ENCODE measurements at regions of chr4 and their contacts with region 1.

Region 1: GRCh38 chr4:185471235-185472102 is at the start of gene CCDC110:
- DNase-seq: peak; percentile 18 to 96
- H3K4me3 ChIP-seq: peak within 1 kb of the TSS; percentile 80 to 97
- H3K27ac ChIP-seq: peak within 1 kb of the TSS; percentile 68 to 74
- H3K4me1 ChIP-seq: peaks cover 0 to 2% of the 10 kb centered on the region in 2 donors
- H3K27me3 ChIP-seq: no peaks in the 10 kb centered on the region
- CTCF ChIP-seq: peak; percentile 48 to 75 (median 65)
- total RNA-seq, gene CCDC110: not detected

Region 2: DNA sequence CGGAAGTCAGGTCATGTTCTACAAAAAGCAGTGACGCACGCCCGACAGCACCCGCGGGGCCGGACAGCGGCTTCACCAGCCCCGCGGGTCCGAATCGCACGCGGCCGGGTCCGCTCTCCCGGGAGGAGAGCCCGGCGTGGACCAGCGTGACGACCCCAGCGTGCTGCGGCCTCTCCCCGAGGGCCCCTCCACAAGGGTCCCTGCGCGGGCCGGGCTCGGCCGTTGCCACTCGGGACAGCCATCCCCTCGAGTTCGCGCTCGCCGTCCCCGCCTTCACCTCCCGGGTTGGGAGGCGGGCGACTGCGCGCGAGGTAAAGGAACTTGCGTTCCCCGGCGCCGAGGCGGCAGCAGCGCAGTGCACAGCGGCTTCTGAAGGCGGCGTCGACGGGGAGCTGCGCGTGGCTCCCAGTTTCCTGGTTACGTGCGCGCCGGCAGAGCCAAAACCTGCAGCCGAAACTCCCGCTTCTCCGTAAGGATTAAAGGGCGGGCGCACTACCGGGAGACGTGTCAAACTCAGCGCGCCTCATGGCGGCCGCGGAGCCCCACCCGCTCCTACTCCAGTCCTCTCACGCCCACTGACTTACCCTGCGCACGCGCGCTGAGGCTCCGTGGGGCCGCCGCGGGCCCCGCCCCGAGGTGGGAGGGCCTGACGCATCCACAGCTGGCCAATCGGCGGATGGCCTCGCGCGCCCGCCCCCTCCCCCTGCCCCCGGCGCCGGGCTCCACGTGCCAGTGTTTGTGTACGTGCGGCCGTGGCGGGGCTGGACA is 75.3 kb before region 1 on chr4:
- intact Hi-C with region 1: loop called (anchors 2 kb)
- DNase-seq: peak; percentile 96 to 99
- H3K4me3 ChIP-seq: peak overlapping the region; percentile 86 to 87
- H3K27ac ChIP-seq: peak overlapping the region; percentile 99 to 100
- H3K4me1 ChIP-seq: peaks cover 2 to 13% of the 10 kb centered on the region in 2 donors
- H3K27me3 ChIP-seq: no peaks in the 10 kb centered on the region
- CTCF ChIP-seq: no peak

Region 3: GRCh38 chr4:185513489-185514181 is 42.2 kb after region 1 on chr4:
- intact Hi-C with region 1: loop called (anchors 5 kb)
- DNase-seq: no peak
- H3K4me3 ChIP-seq: no peak overlapping the region
- H3K27ac ChIP-seq: peak overlapping the region; percentile 13 to 54
- H3K4me1 ChIP-seq: peaks cover 0 to 20% of the 10 kb centered on the region in 2 donors
- H3K27me3 ChIP-seq: no peaks in the 10 kb centered on the region
- CTCF ChIP-seq: no peak

Region 4: DNA sequence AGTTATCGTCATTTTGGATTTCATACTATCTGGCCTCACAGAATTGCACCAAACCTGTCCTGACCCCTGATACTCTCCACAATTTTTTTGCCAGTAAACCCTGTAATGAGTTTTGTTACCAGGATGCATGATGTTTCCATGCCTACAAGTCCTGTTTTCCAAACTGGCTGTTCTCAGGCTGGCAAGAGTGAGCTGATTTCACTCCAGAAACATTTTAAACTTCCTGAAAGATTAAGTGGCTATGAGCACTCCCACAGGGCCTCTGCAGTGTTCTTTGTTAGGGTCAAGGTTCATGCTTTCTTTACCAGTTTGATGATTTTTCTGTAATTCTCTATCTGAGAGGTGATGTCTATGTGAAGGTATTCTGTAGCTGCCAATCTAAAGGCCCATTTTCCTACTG is 95.5 kb after region 1 on chr4:
- intact Hi-C with region 1: loop called (anchors 2 kb)
- DNase-seq: peak in 1 of 2 donors; percentile 90
- H3K4me3 ChIP-seq: no peak overlapping the region
- H3K27ac ChIP-seq: peak overlapping the region; percentile 94 to 95
- H3K4me1 ChIP-seq: peaks cover 17 to 37% of the 10 kb centered on the region in 2 donors
- H3K27me3 ChIP-seq: no peaks in the 10 kb centered on the region
- CTCF ChIP-seq: no peak

Region 5: GRCh38 chr4:185847352-185848107 is 376.1 kb after region 1 on chr4:
- intact Hi-C with region 1: no loop called
- DNase-seq: no peak
- H3K4me3 ChIP-seq: no peak overlapping the region
- H3K27ac ChIP-seq: peak overlapping the region in 1 of 2 donors; percentile 23
- H3K4me1 ChIP-seq: peaks cover 0 to 2% of the 10 kb centered on the region in 2 donors
- H3K27me3 ChIP-seq: no peaks in the 10 kb centered on the region
- CTCF ChIP-seq: no peak

Region 6: DNA sequence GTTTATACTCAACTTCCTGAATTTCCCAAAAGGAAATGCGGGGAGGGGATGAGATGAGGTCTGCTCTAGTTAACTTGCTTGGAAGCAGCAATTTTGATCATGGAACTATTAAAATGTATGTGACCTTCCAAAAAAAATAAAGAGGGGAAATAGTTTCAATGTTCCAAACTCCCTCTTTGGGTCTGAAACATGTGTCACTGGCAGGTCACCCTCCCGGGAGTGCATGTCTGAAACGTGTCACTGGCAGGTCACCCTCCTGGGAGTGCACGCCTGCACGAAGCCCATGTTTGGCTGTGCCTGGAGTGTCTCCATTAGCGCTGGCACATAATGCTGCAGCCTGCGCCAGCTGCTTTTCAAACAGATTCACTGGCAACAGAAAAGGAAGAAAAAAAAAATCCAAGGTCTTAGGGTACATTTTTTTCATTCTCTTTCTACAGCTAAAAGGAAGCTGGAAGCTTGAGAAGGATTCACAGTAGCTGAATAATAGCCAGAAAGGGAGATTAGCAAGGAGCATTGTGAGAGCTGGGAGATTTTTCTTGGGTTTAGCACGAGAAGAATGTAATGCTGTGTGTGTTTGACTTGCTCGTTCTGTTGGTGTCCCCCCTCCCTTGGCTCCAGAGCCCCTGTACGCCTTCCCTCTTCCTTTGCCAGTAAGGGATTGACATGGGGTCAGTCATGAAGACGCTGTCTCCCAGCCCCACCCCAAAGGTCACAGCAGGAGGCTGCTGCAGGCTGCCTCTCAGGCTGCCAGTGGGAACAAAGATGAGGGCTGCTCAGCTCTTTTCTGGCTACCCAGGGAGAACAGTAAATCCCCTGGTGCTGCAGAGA is 558.3 kb after region 1 on chr4:
- intact Hi-C with region 1: loop called (anchors 5 kb)
- DNase-seq: peak; percentile 54 to 95
- H3K4me3 ChIP-seq: peak overlapping the region; percentile 20 to 50
- H3K27ac ChIP-seq: peak overlapping the region; percentile 74 to 86
- H3K4me1 ChIP-seq: peaks cover 7 to 18% of the 10 kb centered on the region in 2 donors
- H3K27me3 ChIP-seq: no peaks in the 10 kb centered on the region
- CTCF ChIP-seq: no peak

Measured in ascending aorta (tissue), 2 donors.